ENCODE measurements at regions of chr1 and their contacts with region 1.

Region 1: GRCh38 chr1:36134505-36135329 is 9.7 kb upstream of the COL8A2 start:
- DNase-seq: no peak
- H3K4me3 ChIP-seq: no peak overlapping the region
- CTCF ChIP-seq: peak; percentile 77

Region 2: DNA sequence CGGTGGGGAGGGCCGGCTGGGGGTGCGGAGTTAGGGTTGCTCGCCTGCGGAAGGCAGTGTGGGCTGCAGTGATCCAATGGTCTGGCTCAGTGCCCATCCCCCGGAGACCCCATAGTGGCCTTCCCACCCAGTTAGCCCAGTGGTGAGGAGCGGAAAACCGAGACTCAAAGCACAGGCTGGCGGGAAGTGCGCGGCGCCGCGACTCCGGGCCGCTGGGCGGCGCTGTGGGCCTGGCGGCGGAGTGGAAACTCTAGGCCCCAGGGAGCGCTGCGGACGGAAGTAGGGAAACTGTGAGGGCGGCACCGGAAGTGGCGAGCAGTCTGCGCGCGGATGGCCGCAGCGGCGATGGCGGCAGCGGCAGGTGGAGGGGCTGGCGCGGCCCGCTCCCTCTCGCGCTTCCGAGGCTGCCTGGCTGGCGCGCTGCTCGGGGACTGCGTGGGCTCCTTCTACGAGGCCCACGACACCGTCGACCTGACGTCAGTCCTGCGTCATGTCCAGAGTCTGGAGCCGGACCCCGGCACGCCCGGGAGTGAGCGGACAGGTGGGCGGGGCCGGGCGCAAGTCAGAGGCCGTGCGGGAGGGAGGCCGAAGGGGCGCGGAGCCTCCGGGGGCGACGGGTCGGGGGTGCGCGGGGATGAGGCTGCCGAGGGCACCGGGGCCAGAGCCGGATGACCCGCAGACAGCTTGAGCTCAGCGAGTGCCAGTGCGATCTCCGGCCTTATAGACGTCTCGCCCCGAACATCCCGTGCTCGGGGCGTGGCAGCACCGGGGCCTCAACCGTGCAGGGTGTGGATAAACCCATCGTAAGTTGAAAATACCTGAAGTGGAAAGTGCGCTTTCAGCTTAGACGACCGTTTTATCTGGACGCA is 45.9 kb before region 1 on chr1 and contains the start of gene ADPRS:
- CTCF ChIA-PET with region 1: interaction called, 453 read pairs
- POLR2A ChIA-PET with region 1: no interaction called
- DNase-seq: no peak
- H3K4me3 ChIP-seq: peak within 1 kb of the TSS; percentile 94
- CTCF ChIP-seq: peak; percentile 98

Region 3: DNA sequence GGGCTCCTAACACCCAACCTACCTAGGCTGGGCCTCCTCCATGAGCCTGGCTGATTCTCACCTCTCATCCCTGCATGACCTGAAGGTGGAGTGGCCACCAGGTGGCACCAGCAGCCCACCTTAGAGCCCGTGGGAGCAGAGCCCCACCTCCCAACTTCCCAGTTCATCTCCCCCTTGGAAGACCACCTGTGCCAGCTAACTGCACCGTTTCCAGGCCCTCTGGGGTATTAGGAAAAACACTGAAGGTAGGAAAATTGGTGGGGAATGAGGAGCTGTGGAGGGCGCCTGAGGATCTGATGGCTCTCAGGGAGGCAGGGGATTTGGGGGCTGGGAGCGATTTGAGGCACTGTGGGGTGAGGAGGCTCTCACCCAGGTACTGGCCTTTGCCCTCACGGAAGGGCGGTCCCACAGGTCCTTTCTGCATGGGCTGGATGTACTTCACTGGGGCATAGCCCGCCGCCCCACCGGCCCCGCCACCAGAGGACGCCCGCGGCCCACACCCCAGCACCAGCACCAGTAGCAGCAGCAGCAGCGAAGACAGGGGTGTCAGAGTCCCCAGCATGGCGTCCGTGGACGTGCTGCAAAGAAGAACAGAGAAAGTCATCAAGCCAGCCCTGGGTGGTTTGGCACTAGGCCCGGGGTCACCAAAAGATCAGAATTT is 34.9 kb before region 1 on chr1:
- CTCF ChIA-PET with region 1: interaction called, 453 read pairs
- POLR2A ChIA-PET with region 1: no interaction called
- DNase-seq: no peak
- H3K4me3 ChIP-seq: no peak overlapping the region
- CTCF ChIP-seq: peak; percentile 91

Region 4: DNA sequence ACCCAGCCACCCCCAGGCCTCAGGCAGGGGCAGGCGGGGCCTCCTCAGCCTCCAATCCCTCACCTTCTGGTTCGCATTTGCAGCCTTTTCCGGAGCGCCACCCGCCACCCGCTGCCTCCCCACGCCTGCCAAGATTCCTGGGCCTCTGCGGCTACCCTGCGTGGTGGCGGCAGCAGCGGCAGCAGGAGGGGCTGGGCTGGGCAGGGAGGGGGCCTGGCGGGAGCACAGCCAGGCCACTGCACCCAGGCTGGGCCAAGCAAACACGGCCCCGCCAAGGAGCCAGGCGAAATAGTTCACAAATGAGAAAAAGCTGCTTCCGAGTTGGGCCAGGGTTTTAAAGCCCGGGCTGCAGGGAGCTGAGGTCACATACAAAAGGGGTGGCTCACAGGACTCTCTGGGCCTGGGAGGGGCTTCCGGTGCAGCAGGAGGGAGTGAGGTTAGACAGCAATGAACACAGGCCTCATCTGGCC is 19.5 kb before region 1 on chr1:
- CTCF ChIA-PET with region 1: interaction called, 158 read pairs
- POLR2A ChIA-PET with region 1: interaction called, 15 read pairs
- DNase-seq: peak; percentile 55
- H3K4me3 ChIP-seq: 0 out of 2 replicates have a peak overlapping the region, but pooled peaks have one; percentile 1
- CTCF ChIP-seq: no peak

Region 5: GRCh38 chr1:36223993-36224536 is 89.3 kb after region 1 on chr1 and contains the start of gene THRAP3:
- CTCF ChIA-PET with region 1: interaction called, 20 read pairs
- POLR2A ChIA-PET with region 1: no interaction called
- DNase-seq: peak; percentile 95
- H3K4me3 ChIP-seq: peak within 1 kb of the TSS; percentile 85
- CTCF ChIP-seq: no peak

Region 6: GRCh38 chr1:36497207-36497606 is 362.5 kb after region 1 on chr1:
- CTCF ChIA-PET with region 1: no interaction called
- POLR2A ChIA-PET with region 1: no interaction called
- DNase-seq: no peak
- H3K4me3 ChIP-seq: no peak overlapping the region
- CTCF ChIP-seq: no peak

Measured in AG04449 (cell line).